Panc1 (cell line): ENCODE measurements at regions of chr3 and their contacts with region 1.

Region 1: DNA sequence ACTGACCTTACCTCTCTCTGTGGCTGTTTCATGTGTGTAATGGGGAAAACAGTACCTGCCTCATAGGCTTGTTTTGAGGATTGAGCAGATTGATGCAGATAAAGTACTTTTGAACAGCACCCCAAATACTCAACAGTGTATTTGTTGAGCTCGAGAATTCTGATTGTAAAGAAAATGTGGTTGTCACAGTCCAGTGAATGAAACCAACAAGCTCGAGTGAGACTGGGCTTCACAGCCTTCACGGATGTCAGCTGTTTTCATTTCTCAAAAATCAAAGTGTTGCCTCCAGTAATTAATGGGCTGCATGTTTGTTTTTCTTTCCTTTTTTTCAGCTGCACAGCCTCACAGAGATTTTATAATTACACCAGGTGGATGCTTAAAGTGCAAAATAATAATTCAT is 43.7 kb downstream of the PARP15 start:
- DNase-seq: no peak
- ATAC-seq: no peak
- H3K4me3 ChIP-seq: no peak overlapping the region
- H3K27ac ChIP-seq: no peak overlapping the region
- H3K4me1 ChIP-seq: no peaks in the 10 kb centered on the region
- H3K27me3 ChIP-seq: no peaks in the 10 kb centered on the region
- CTCF ChIP-seq: no peak

Region 2: GRCh38 chr3:122635789-122636188 is 14.7 kb after region 1 on chr3:
- CTCF ChIA-PET with region 1: no interaction called
- POLR2A ChIA-PET with region 1: interaction called, 12 read pairs
- in situ Hi-C with region 1: no loop called
- intact Hi-C with region 1: no loop called
- DNase-seq: no peak
- ATAC-seq: no peak
- H3K4me3 ChIP-seq: no peak overlapping the region
- H3K27ac ChIP-seq: no peak overlapping the region
- H3K4me1 ChIP-seq: no peaks in the 10 kb centered on the region
- H3K27me3 ChIP-seq: peaks cover 11% of the 10 kb centered on the region; the same call in 1 of the 2 replicates
- CTCF ChIP-seq: no peak